Activated T-helper 2 cell treated with anti-CD3 and anti-CD28 coated beads, Interferon-gamma antibody, Interleukin-2, Interleukin-4, amounts not matched to agents 10 μg/mL and 5 μg/mL and 100 μg/mL, durations not matched to agents 14 hours and 24 hours and 36 hours (primary cell): ENCODE measurements at regions of chr7 and their contacts with region 1.

Region 1: GRCh38 chr7:138738551-138739335 is 37.6 kb upstream of the SVOPL start:
- DNase-seq: peak; percentile 69
- H3K4me3 Mint-ChIP-seq: no peak overlapping the region
- H3K27ac Mint-ChIP-seq: no peak overlapping the region
- H3K4me1 Mint-ChIP-seq: peaks cover 2% of the 10 kb centered on the region
- H3K27me3 Mint-ChIP-seq: peaks cover 5% of the 10 kb centered on the region

Region 2: GRCh38 chr7:138161600-138162081 is 577.1 kb before region 1 on chr7:
- intact Hi-C with region 1: loop called (anchors 1 kb)
- DNase-seq: peak; percentile 67
- H3K4me3 Mint-ChIP-seq: no peak overlapping the region
- H3K27ac Mint-ChIP-seq: no peak overlapping the region
- H3K4me1 Mint-ChIP-seq: no peaks in the 10 kb centered on the region
- H3K27me3 Mint-ChIP-seq: no peaks in the 10 kb centered on the region

Region 3: DNA sequence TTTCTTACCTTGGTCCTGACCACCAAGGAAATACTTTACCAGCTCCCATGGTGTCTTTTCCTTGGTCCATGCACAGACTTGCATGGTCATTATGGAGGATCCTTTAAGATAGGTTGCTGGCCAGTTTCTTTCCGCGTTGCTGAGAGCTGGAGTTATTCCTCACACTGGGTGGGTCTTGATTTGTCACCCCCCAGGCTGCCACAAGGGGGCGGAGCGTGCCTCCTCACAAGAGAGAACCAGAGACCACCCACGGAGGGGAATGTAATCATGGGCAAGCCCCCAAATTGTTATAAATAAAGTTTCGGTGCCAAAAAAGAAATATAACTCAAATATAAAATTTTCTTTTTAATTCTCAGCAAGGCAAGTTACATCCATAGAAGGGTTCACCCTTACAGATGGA is 289.2 kb before region 1 on chr7:
- intact Hi-C with region 1: loop called (anchors 1 kb)
- DNase-seq: no peak
- H3K4me3 Mint-ChIP-seq: no peak overlapping the region
- H3K27ac Mint-ChIP-seq: no peak overlapping the region
- H3K4me1 Mint-ChIP-seq: no peaks in the 10 kb centered on the region
- H3K27me3 Mint-ChIP-seq: peaks cover 7% of the 10 kb centered on the region

Region 4: DNA sequence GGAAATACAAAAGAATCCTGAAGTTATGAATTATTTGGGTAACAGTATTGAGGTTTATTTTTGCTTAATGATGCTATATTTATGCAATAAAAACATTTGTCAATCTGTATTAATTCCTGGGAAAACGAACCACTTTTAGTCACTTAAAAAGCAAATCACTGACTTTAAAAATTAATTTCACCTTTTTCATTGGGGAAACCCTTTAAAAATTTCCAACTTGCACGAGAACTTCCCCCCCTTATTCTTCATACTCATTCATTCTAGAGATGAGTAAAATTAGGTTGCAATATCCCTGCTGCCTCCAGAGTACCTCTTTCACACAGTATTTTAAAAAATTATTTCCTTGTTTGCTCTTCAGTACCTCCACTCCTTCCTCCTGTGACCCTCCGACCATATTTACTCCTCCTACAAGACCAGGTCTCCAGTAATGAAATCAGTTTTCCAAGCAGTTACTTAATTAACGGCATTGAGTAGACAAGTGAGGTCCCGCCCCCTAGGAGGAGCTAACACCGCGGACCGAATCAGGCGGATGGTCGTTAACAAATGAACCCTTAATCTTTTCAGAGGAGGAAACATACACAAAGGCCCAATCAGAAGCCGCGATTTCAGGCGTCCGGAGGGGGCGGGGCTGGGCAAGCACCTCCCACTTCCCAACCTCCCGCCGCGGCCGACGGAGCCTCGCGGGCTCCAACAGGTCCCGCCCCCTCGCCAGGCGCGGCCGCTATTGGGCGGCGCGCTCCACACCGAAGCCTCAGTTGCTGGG is 279.1 kb before region 1 on chr7:
- intact Hi-C with region 1: loop called (anchors 5 kb)
- DNase-seq: peak; percentile 97
- H3K4me3 Mint-ChIP-seq: peak overlapping the region; percentile 74
- H3K27ac Mint-ChIP-seq: peak overlapping the region; percentile 21
- H3K4me1 Mint-ChIP-seq: peaks cover 24% of the 10 kb centered on the region
- H3K27me3 Mint-ChIP-seq: peaks cover 3% of the 10 kb centered on the region

Region 5: DNA sequence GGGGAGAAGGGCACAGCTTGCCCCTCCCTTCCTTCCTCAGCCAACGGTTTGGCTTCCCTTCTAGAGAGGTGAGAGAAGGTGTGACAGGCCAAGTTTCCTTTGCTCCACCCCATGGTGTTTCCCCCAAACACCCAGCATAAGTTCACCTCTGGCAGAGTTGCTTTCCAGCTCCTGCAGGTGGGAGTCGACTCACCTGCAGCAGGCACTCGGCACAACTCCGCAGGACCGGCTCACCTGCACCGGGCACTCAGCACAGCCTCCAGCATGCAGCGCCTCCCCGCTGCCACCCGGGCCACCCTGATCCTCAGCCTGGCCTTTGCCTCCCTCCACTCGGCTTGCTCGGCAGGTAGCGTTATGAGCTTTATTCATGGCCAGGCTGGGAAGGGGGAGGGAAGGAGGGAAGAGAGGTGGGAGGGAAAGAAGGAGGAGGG is 59.1 kb after region 1 on chr7 and contains the starts of genes ATP6V0A4 and TMEM213:
- intact Hi-C with region 1: no loop called
- DNase-seq: no peak
- H3K4me3 Mint-ChIP-seq: no peak within 1 kb of the TSS
- H3K27ac Mint-ChIP-seq: no peak within 1 kb of the TSS
- H3K4me1 Mint-ChIP-seq: peaks cover 2% of the 10 kb centered on the region
- H3K27me3 Mint-ChIP-seq: peaks cover 12% of the 10 kb centered on the region
- total RNA-seq, gene ATP6V0A4: not detected in 2 replicates
- total RNA-seq, gene TMEM213: not detected in 2 replicates

Region 6: DNA sequence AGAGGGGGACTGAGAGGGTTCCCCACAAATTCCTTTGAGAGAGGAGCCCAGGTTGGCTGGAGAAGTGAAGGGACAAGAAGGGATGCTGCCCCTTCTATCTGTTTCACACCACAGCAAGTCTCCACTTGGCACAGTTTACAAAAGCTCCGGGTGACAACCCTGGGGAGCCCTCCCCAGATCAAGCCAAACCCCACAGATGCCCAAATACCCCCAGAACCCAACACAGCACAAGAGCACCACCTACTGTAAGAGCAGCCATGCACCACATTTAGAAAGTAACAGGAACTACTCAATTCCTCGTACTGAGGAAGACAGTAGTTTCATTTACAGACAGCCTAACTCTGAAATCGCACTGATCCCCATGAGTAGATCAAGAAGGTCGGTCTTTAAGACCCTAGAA is 127.1 kb after region 1 on chr7:
- intact Hi-C with region 1: loop called (anchors 1 kb)
- DNase-seq: peak; percentile 46
- H3K4me3 Mint-ChIP-seq: no peak overlapping the region
- H3K27ac Mint-ChIP-seq: no peak overlapping the region
- H3K4me1 Mint-ChIP-seq: peaks cover 8% of the 10 kb centered on the region
- H3K27me3 Mint-ChIP-seq: no peaks in the 10 kb centered on the region